MCF 10A (cell line): ENCODE measurements at regions of chr6 and their contacts with region 1.

Region 1: GRCh38 chr6:143397229-143398222 is 53.0 kb downstream of the ADAT2 start:
- DNase-seq: peak; percentile 99
- H3K4me3 Mint-ChIP-seq: peak overlapping the region; percentile 24
- H3K27ac Mint-ChIP-seq: peak overlapping the region; percentile 100
- H3K4me1 Mint-ChIP-seq: peaks cover 73% of the 10 kb centered on the region
- H3K27me3 Mint-ChIP-seq: no peaks in the 10 kb centered on the region
- CTCF ChIP-seq: no peak

Region 2: DNA sequence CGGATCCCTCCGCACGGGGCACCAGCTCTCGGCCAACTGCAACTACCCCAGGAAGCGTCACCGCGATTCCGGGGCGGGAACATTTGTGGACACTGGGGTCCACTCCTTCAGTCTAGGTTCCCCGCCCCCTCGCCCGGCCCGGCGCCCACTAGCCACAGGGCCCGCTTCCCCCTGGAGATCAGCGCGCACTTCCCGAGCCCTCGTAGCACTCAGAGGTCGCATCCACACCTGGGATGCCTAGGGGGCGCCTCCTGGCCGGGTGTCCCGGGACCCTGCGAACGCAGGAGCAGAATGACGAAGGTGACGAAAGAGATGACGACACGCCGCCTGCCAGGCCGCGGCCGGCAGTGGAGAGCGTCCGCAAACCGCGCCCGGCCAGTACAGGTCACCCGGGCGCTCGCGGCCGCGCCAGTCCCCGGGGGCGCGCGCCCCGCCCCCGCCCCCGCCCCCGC is 337.1 kb before region 1 on chr6:
- CTCF ChIA-PET with region 1: no interaction called
- POLR2A ChIA-PET with region 1: interaction called, 26 read pairs
- intact Hi-C with region 1: loop called (anchors 1 kb)
- DNase-seq: peak; percentile 90
- H3K4me3 Mint-ChIP-seq: peak overlapping the region; percentile 94
- H3K27ac Mint-ChIP-seq: peak overlapping the region; percentile 97
- H3K4me1 Mint-ChIP-seq: peaks cover 37% of the 10 kb centered on the region
- H3K27me3 Mint-ChIP-seq: no peaks in the 10 kb centered on the region
- CTCF ChIP-seq: no peak

Region 3: DNA sequence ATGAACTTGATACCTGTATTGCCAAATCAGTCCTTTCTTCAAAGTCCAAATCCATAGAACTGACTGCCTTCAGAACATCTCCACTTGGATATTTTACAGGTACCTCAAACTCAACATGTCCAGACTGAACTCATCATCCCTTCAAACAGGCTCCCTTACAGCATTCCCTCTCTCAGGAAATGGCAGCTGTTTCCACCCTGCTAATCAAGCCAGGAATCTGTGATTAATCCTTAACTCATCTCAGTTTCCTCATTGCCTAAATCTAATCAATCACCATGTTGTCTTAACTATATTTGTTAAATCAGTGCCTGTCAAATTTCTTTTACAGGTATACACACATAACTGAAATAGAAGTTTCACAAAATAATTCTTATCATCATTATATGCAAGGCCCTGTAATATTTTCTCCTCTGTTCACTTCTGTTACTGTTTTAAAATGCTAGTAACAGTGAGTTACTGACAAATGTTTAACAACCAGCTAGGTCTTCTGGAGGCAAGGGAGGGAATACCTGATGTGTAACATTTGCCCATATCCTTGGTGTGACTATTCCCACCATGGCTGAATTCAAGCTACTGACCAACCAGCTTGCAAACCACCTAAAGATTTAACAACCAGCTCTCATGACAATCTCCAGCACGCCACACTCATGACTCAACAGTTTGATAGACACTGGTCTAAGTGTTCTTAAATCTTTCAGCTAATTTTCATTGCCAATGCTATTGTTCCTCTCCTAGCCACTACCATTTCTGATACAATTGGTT is 72.0 kb before region 1 on chr6:
- CTCF ChIA-PET with region 1: interaction called, 3 read pairs
- POLR2A ChIA-PET with region 1: interaction called, 402 read pairs
- intact Hi-C with region 1: no loop called
- DNase-seq: peak; percentile 77
- H3K4me3 Mint-ChIP-seq: no peak overlapping the region
- H3K27ac Mint-ChIP-seq: no peak overlapping the region
- H3K4me1 Mint-ChIP-seq: peaks cover 13% of the 10 kb centered on the region
- H3K27me3 Mint-ChIP-seq: no peaks in the 10 kb centered on the region
- CTCF ChIP-seq: no peak

Region 4: GRCh38 chr6:143410859-143411270 is 13.3 kb after region 1 on chr6:
- CTCF ChIA-PET with region 1: interaction called, 4 read pairs
- POLR2A ChIA-PET with region 1: interaction called, 28 read pairs
- intact Hi-C with region 1: no loop called
- DNase-seq: peak; percentile 65
- H3K4me3 Mint-ChIP-seq: no peak overlapping the region
- H3K27ac Mint-ChIP-seq: peak overlapping the region; percentile 77
- H3K4me1 Mint-ChIP-seq: peaks cover 54% of the 10 kb centered on the region
- H3K27me3 Mint-ChIP-seq: no peaks in the 10 kb centered on the region
- CTCF ChIP-seq: no peak

Region 5: DNA sequence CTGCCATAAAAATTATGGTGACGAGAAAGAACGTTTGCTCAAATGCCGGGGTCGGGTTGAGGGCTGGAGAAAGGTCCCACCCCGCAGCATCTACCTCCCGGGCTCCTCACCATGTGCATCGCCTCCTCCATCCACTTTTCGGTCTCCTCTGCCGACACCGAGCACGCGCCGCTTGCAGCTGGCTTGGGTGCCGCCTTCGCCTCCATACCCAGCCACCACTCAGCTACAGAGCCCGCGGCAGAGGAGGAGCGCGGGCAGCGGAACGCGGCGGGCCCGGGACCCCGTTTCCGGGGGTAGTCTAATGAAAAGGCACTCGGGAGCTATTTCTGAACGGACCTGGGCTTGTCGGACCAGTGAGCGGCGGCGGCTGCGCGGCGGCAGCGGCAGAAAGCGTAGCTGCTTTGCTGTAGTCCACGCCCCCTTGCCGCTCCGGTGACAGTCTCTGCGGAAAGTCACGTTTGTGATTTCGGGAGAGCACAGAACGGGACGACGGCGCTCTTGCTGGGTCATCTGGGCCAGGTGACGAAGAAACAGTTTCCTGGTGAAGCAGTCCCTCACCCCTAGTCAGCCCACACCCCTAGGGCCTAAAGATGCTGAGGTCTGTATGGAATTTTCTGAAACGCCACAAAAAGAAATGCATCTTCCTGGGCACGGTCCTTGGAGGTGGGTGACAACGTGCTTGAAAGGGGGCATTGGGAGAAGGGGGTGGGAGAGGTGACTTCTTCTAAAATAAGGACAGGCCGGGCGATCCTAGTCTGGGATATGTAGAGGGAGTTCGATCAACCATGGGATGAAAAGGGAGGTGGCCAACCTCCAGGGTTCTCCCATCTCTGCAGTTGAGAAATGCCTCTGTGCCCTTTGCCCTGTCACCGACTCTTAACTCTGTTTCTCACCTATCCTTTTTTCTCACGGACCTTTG is 53.2 kb after region 1 on chr6 and contains the starts of genes ADAT2 and PEX3:
- CTCF ChIA-PET with region 1: no interaction called
- POLR2A ChIA-PET with region 1: interaction called, 12 read pairs
- intact Hi-C with region 1: no loop called
- DNase-seq: peak; percentile 95
- H3K4me3 Mint-ChIP-seq: peak within 1 kb of the TSS; percentile 97
- H3K27ac Mint-ChIP-seq: peak within 1 kb of the TSS; percentile 97
- H3K4me1 Mint-ChIP-seq: peaks cover 24% of the 10 kb centered on the region
- H3K27me3 Mint-ChIP-seq: no peaks in the 10 kb centered on the region
- CTCF ChIP-seq: no peak
- total RNA-seq, gene ADAT2: 23.2 and 27.7 TPM in 2 replicates
- total RNA-seq, gene PEX3: 19.8 and 24.3 TPM in 2 replicates